CD8-positive, alpha-beta T cell (primary cell): ENCODE measurements at regions of chr7 and their contacts with region 1.

Region 1: GRCh38 chr7:41529831-41530230 is 173.1 kb downstream of the INHBA start:
- DNase-seq: no peak
- ATAC-seq: no peak
- H3K4me3 ChIP-seq: no peak overlapping the region
- H3K4me3 Mint-ChIP-seq: no peak overlapping the region
- H3K27ac ChIP-seq: no peak overlapping the region
- H3K27ac Mint-ChIP-seq: no peak overlapping the region
- H3K4me1 ChIP-seq: no peaks in the 10 kb centered on the region
- H3K4me1 Mint-ChIP-seq: no peaks in the 10 kb centered on the region
- H3K27me3 ChIP-seq: no peaks in the 10 kb centered on the region
- H3K27me3 Mint-ChIP-seq: no peaks in the 10 kb centered on the region
- CTCF ChIP-seq: no peak

Region 2: GRCh38 chr7:40909346-40910005 is 620.4 kb before region 1 on chr7:
- CTCF ChIA-PET with region 1: no interaction called
- POLR2A ChIA-PET with region 1: no interaction called
- intact Hi-C with region 1: no loop called
- DNase-seq: no peak
- ATAC-seq: no peak
- H3K4me3 ChIP-seq: no peak overlapping the region
- H3K4me3 Mint-ChIP-seq: no peak overlapping the region
- H3K27ac ChIP-seq: no peak overlapping the region
- H3K27ac Mint-ChIP-seq: no peak overlapping the region
- H3K4me1 ChIP-seq: no peaks in the 10 kb centered on the region
- H3K4me1 Mint-ChIP-seq: no peaks in the 10 kb centered on the region
- H3K27me3 ChIP-seq: no peaks in the 10 kb centered on the region
- H3K27me3 Mint-ChIP-seq: no peaks in the 10 kb centered on the region
- CTCF ChIP-seq: no peak

Region 3: GRCh38 chr7:41459623-41460261 is 70.1 kb before region 1 on chr7:
- CTCF ChIA-PET with region 1: no interaction called
- POLR2A ChIA-PET with region 1: no interaction called
- intact Hi-C with region 1: loop called in 1 of 2 experiments (anchors 10 kb)
- DNase-seq: no peak
- ATAC-seq: no peak
- H3K4me3 ChIP-seq: no peak overlapping the region
- H3K4me3 Mint-ChIP-seq: no peak overlapping the region
- H3K27ac ChIP-seq: no peak overlapping the region
- H3K27ac Mint-ChIP-seq: no peak overlapping the region
- H3K4me1 ChIP-seq: no peaks in the 10 kb centered on the region
- H3K4me1 Mint-ChIP-seq: no peaks in the 10 kb centered on the region
- H3K27me3 ChIP-seq: no peaks in the 10 kb centered on the region
- H3K27me3 Mint-ChIP-seq: peaks cover 2% of the 10 kb centered on the region
- CTCF ChIP-seq: no peak